Aorta (tissue), 5 donors: ENCODE measurements at regions of chr9 and their contacts with region 1.

Region 1: DNA sequence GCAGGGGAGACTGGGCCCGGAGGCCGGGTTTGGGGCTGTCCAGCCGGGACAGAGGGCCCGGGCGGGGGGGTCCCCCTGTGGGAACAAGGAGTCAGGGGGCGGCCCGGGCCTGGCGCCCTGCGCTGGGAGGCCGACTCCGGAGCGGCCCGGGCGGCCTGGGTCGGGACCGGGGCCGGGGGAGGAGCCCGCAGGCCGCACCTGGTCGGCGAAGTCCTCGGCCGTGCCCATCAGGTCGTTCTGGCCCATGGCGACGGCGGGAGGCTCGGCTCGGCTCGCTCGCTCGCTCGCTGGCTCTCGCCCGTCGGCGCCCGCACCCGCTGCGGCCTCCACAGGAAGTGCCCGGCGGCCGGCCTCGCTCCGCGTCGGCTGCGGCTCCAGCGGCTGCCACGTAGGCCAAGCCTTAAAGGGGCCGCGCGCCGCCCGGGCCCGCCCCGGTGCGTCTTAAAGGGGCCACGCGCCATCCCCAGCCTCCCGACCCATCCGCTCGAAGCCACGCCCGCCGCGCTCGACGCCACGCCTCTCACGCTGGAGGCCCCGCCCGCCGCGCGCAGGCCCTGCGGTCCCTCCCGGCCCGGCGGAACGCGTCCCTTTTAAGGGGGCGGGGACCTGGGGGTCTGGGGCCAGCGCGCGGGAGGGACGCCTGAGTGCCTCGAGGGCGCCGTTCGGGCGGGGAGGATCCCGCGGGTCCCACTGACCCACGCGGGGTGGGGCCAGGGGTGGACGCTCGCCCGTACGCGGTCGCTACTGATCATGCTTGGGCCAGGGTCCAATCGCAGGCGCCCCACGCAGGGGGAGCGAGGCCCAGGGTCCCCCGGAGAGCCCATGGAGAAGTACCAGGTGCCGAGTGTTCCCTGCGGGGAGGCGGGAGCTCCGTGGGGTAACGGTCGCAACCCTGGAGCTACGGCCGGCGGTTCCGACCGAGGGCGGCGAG is at the starts of genes STKLD1 and SURF4:
- DNase-seq: peak; percentile 97 to 98
- ATAC-seq: peak; percentile 97
- H3K4me3 ChIP-seq: peak within 1 kb of the TSS; percentile 99
- H3K27ac ChIP-seq: peak within 1 kb of the TSS; percentile 85 to 93
- H3K4me1 ChIP-seq: no peaks in the 10 kb centered on the region
- H3K27me3 ChIP-seq: no peaks in the 10 kb centered on the region
- total RNA-seq, gene STKLD1: 1.4 TPM in 1 of 2 donors, not detected in the other
- total RNA-seq, gene SURF4: 114 to 123 TPM

Region 2: GRCh38 chr9:133306242-133307204 is 69.5 kb before region 1 on chr9:
- intact Hi-C with region 1: no loop called
- DNase-seq: no peak
- ATAC-seq: no peak
- H3K4me3 ChIP-seq: no peak overlapping the region
- H3K27ac ChIP-seq: no peak overlapping the region
- H3K4me1 ChIP-seq: no peaks in the 10 kb centered on the region
- H3K27me3 ChIP-seq: no peaks in the 10 kb centered on the region

Region 3: DNA sequence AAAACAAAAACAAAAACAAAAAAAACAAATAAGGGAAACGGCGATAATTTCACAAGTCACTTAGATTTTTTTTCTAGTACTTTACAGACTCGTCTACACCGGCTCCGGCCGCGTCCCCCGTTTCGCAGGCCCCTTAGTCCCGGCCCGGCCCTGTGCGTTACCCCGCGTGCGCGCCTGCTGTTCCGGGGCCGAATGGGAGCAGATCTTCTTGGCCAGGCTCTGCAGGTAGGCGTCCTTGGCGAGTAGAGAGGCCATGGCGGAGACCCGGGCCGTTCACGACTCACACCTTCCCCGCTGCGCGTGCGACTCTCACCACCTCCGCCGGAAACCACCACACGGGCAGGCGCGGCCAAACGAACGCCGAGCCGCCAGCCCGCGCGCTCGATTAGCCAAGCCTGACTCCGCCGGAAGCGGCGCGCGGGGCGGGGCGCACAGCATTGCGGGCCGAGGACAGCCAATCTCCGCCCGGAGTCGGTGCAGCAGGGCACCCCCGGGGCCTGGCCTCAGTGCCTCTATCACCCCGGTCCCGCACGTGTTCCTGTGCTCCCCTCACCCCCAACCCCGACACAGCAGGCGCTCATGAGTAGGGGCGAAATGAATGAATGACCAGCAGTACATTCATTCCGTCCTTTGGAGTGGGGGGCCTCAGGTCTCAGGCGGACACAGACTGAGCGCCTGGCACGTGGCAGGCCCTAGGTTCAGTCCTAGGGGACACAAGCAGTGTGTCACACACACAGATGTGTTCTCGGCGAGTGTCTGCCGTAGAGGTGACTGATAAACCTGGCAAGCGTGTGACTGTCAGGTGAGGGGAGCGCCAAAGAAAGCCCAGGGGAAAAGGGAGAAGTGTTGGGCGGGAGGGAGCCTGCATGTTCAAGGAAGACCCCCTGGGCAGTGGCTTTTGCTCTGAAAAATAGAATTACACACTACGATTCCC is 39.8 kb before region 1 on chr9 and contains the start of gene SURF6:
- intact Hi-C with region 1: loop called in 1 of 2 experiments (anchors 5 kb)
- DNase-seq: peak; percentile 94 to 98
- ATAC-seq: peak; percentile 93
- H3K4me3 ChIP-seq: peak within 1 kb of the TSS; percentile 51 to 72
- H3K27ac ChIP-seq: peak within 1 kb of the TSS in 1 of 2 donors; percentile 31
- H3K4me1 ChIP-seq: no peaks in the 10 kb centered on the region
- H3K27me3 ChIP-seq: no peaks in the 10 kb centered on the region
- total RNA-seq, gene SURF6: 13.3 to 16.3 TPM

Region 4: GRCh38 chr9:133459476-133460404 is 83.8 kb after region 1 on chr9 and contains the start of gene CACFD1:
- intact Hi-C with region 1: loop called in 1 of 2 experiments (anchors 5 kb)
- DNase-seq: peak; percentile 97 to 99
- ATAC-seq: peak; percentile 94
- H3K4me3 ChIP-seq: peak within 1 kb of the TSS; percentile 59 to 65
- H3K27ac ChIP-seq: peak within 1 kb of the TSS; percentile 43 to 74
- H3K4me1 ChIP-seq: no peaks in the 10 kb centered on the region
- H3K27me3 ChIP-seq: no peaks in the 10 kb centered on the region
- total RNA-seq, gene CACFD1: 11.5 to 15.9 TPM